B cell (primary cell): ENCODE measurements at regions of chr2 and their contacts with region 1.

Region 1: GRCh38 chr2:216057688-216058193 is 23.9 kb downstream of the PECR start:
- DNase-seq: peak; percentile 79
- ATAC-seq: peak; percentile 92
- H3K4me3 ChIP-seq: peak overlapping the region; percentile 13 to 58 (median 50)
- H3K4me3 Mint-ChIP-seq: peak overlapping the region; percentile 84
- H3K27ac ChIP-seq: peak overlapping the region; percentile 93 to 95
- H3K27ac Mint-ChIP-seq: peak overlapping the region; percentile 98
- H3K4me1 ChIP-seq: peaks cover 17 to 19% of the 10 kb centered on the region in 2 donors
- H3K4me1 Mint-ChIP-seq: peaks cover 34% of the 10 kb centered on the region
- H3K27me3 ChIP-seq: no peaks in the 10 kb centered on the region
- H3K27me3 Mint-ChIP-seq: no peaks in the 10 kb centered on the region
- CTCF ChIP-seq: no peak

Region 2: DNA sequence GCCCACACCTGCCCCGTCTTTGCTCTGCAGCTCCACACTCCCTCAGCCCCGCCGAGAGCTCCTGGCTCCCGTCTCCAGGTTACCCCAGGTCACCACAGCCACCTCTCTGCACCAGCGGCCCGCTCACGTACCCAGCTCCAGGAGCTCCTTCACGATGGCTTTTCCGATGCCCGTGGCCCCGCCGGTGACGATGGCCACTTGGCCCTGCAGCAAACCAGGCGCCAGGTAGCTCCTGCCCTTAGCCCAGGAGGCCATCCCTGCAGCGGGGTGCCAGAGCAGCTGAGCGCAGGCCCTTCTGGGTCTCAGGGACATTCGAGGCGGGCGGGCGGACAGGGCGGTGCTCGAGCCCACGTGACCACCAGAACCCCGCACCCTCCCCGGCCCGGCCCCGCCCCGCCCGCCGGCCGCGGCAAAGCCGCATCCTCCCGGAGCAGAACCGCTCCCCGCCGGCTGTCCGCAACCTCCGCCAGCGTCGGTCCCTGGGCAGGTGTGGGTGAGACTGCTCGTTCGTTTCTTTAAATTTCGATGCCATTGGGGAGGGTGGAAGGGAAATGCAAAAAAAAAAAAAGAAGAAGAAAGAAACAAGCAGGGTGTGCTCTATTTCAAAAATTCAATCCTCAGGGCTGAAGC is 23.9 kb after region 1 on chr2 and contains the starts of genes PECR and TMEM169:
- CTCF ChIA-PET with region 1: interaction called, 5 read pairs
- POLR2A ChIA-PET with region 1: interaction called, 7 read pairs
- intact Hi-C with region 1: loop called (anchors 2 kb)
- DNase-seq: peak; percentile 76
- ATAC-seq: peak; percentile 97
- H3K4me3 ChIP-seq: peak within 1 kb of the TSS; percentile 63 to 87 (median 79)
- H3K4me3 Mint-ChIP-seq: peak within 1 kb of the TSS; percentile 91
- H3K27ac ChIP-seq: peak within 1 kb of the TSS; percentile 51 to 68
- H3K27ac Mint-ChIP-seq: peak within 1 kb of the TSS; percentile 80
- H3K4me1 ChIP-seq: peaks cover 40 to 41% of the 10 kb centered on the region in 2 donors
- H3K4me1 Mint-ChIP-seq: peaks cover 45% of the 10 kb centered on the region
- H3K27me3 ChIP-seq: no peaks in the 10 kb centered on the region
- H3K27me3 Mint-ChIP-seq: no peaks in the 10 kb centered on the region
- CTCF ChIP-seq: no peak
- total RNA-seq, gene PECR: 15.6 and 16.5 TPM in 2 replicates
- total RNA-seq, gene TMEM169: 0.84 and 1.2 TPM in 2 replicates

Region 3: DNA sequence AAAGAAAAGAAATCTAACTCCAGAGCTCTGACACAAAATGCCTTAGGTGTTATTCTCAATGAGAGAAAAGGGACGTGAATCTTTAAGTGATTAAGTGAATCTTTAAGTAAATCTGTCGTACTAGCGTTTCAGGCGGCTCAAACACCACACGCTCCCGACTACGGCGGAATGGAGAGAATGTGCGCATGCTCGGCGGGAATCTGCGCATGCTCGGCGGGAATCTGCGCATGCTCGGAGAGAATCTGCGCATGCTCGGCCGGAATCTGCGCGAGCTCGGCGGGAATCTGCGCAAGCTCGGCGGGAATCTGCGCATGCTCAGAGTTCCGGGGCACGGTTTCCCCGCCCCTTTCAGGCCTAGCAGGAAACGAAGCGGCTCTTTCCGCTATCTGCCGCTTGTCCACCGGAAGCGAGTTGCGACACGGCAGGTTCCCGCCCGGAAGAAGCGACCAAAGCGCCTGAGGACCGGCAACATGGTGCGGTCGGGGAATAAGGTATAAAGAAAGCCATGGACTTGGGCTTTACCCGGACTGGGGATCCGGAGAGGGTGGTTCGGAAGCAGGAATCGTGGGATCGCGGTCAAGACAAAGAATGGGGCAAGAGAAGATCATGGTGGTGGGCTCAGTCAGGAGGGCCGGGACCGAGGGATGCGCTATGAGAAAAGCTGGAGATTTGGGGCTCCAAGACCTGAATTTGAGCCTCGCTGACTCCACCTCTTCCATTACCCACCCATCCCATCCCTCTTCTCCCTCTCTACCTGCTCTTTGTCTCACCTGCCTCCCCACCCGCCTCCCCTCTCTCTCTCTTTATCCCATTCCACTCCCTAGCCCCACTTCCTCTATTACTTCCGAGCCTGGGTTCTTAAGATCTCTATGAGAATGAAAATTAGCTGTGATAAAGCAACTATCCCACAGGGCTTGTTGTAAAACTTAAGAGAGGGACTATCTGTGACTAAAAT is 51.5 kb after region 1 on chr2 and contains the start of gene XRCC5:
- CTCF ChIA-PET with region 1: interaction called, 10 read pairs
- POLR2A ChIA-PET with region 1: interaction called, 4 read pairs
- intact Hi-C with region 1: loop called (anchors 2 kb)
- DNase-seq: peak; percentile 99
- ATAC-seq: peak; percentile 91
- H3K4me3 ChIP-seq: peak within 1 kb of the TSS; percentile 71 to 96 (median 95)
- H3K4me3 Mint-ChIP-seq: peak within 1 kb of the TSS; percentile 100
- H3K27ac ChIP-seq: peak within 1 kb of the TSS; percentile 91 to 97
- H3K27ac Mint-ChIP-seq: peak within 1 kb of the TSS; percentile 100
- H3K4me1 ChIP-seq: peaks cover 26 to 31% of the 10 kb centered on the region in 2 donors
- H3K4me1 Mint-ChIP-seq: peaks cover 51% of the 10 kb centered on the region
- H3K27me3 ChIP-seq: no peaks in the 10 kb centered on the region
- H3K27me3 Mint-ChIP-seq: peaks cover 3% of the 10 kb centered on the region
- CTCF ChIP-seq: no peak
- total RNA-seq, gene XRCC5: 198 and 216 TPM in 2 replicates

Region 4: GRCh38 chr2:216114714-216115557 is 57.2 kb after region 1 on chr2:
- CTCF ChIA-PET with region 1: interaction called, 10 read pairs
- POLR2A ChIA-PET with region 1: interaction called, 4 read pairs
- intact Hi-C with region 1: loop called (anchors 2 kb)
- DNase-seq: peak; percentile 99
- ATAC-seq: peak; percentile 90
- H3K4me3 ChIP-seq: peak overlapping the region; percentile 52 to 90 (median 69)
- H3K4me3 Mint-ChIP-seq: peak overlapping the region; percentile 93
- H3K27ac ChIP-seq: peak overlapping the region; percentile 80 to 96
- H3K27ac Mint-ChIP-seq: peak overlapping the region; percentile 98
- H3K4me1 ChIP-seq: peaks cover 32 to 37% of the 10 kb centered on the region in 2 donors
- H3K4me1 Mint-ChIP-seq: peaks cover 71% of the 10 kb centered on the region
- H3K27me3 ChIP-seq: no peaks in the 10 kb centered on the region
- H3K27me3 Mint-ChIP-seq: no peaks in the 10 kb centered on the region
- CTCF ChIP-seq: peak; percentile 88

Region 5: GRCh38 chr2:216287251-216287650 is 229.5 kb after region 1 on chr2:
- CTCF ChIA-PET with region 1: no interaction called
- POLR2A ChIA-PET with region 1: no interaction called
- intact Hi-C with region 1: no loop called
- DNase-seq: no peak
- ATAC-seq: no peak
- H3K4me3 ChIP-seq: no peak overlapping the region
- H3K4me3 Mint-ChIP-seq: no peak overlapping the region
- H3K27ac ChIP-seq: no peak overlapping the region
- H3K27ac Mint-ChIP-seq: no peak overlapping the region
- H3K4me1 ChIP-seq: no peaks in the 10 kb centered on the region
- H3K4me1 Mint-ChIP-seq: no peaks in the 10 kb centered on the region
- H3K27me3 ChIP-seq: peaks cover 0 to 4% (median 0%) of the 10 kb centered on the region in 4 experiments
- H3K27me3 Mint-ChIP-seq: peaks cover 13% of the 10 kb centered on the region
- CTCF ChIP-seq: no peak